Activated CD4-positive, alpha-beta T cell treated with anti-CD3 and anti-CD28 coated beads for 36 hours (primary cell): ENCODE measurements at regions of chr6 and their contacts with region 1.

Region 1: DNA sequence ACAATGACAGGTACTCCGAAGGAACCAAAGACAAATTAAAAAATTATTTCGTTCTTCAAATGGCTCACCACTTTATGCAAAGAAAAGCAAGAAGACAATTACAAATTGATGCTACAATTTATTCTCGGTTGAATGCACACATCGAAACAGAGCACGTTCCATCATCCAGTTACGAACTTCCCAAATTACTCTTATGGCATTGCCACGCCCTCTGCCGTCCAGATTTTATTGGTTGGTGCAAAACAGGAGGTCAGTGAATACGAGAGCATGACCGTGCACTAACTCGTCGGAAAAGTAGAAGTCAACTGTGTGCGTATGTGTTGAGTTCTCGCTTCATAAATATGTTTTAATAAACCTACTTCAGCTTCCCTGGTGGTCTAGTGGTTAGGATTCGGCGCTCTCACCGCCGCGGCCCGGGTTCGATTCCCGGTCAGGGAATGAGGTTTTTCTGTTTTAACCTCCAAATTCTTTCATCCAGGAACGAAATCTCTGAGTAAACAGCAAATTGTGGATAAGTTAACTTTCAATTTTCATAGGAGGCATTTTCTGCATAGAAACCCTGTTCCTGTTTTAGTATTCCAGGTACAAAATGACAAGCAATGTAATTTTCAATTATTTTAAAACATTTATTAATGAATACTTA is 23.2 kb downstream of the ZNF311 start:
- DNase-seq: peak; percentile 82
- ATAC-seq: peak; percentile 42
- H3K4me3 Mint-ChIP-seq: peak overlapping the region; percentile 86
- H3K27ac Mint-ChIP-seq: peak overlapping the region; percentile 79
- H3K4me1 Mint-ChIP-seq: peaks cover 42% of the 10 kb centered on the region
- H3K27me3 Mint-ChIP-seq: peaks cover 47% of the 10 kb centered on the region

Region 2: GRCh38 chr6:28880894-28881780 is 100.8 kb before region 1 on chr6:
- CTCF ChIA-PET with region 1: interaction called, 4 read pairs
- POLR2A ChIA-PET with region 1: no interaction called
- intact Hi-C with region 1: loop called in 1 of 2 experiments (anchors 5 kb)
- DNase-seq: peak; percentile 79
- ATAC-seq: no peak
- H3K4me3 Mint-ChIP-seq: peak overlapping the region; percentile 57
- H3K27ac Mint-ChIP-seq: peak overlapping the region; percentile 69
- H3K4me1 Mint-ChIP-seq: peaks cover 29% of the 10 kb centered on the region
- H3K27me3 Mint-ChIP-seq: peaks cover 3% of the 10 kb centered on the region

Region 3: DNA sequence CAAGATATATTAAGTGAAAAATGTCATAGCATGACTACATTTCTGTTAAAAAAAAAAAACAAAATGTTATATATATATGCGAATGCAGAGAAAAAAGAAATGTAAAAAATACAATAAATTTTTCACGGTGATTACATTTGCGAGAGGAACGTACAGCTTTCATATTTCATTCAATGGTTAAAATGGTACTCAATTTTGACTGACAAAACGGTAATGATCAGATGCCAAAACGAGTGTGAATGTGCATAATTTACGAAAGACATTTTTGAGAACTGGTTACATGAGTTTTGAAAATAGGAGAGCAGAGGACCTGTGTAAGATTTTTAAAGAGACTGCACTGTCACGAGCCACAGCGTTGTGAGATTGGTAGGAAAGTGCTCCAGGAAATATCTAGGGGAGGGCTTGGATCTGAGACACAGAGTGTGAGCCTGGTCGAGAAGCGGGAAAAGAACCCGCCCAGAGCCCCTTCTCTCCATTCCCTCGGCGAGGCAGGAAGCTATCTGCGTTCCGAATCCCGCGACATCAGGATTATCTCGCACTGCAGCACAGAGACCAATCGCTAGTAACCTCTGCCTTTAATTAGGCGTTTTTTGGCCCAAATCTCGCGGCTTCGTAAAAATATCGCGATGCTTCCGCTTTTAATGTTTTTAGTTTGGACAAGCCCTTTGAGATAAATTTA is 86.7 kb before region 1 on chr6:
- CTCF ChIA-PET with region 1: interaction called, 8 read pairs
- POLR2A ChIA-PET with region 1: no interaction called
- intact Hi-C with region 1: loop called (anchors 1 kb)
- DNase-seq: peak; percentile 94
- ATAC-seq: peak; percentile 82
- H3K4me3 Mint-ChIP-seq: peak overlapping the region; percentile 98
- H3K27ac Mint-ChIP-seq: peak overlapping the region; percentile 99
- H3K4me1 Mint-ChIP-seq: peaks cover 9% of the 10 kb centered on the region
- H3K27me3 Mint-ChIP-seq: no peaks in the 10 kb centered on the region

Region 4: GRCh38 chr6:28923318-28924102 is 58.4 kb before region 1 on chr6 and contains the start of gene TRIM27:
- CTCF ChIA-PET with region 1: interaction called, 5 read pairs
- POLR2A ChIA-PET with region 1: no interaction called
- intact Hi-C with region 1: loop called in 1 of 2 experiments (anchors 1 kb)
- DNase-seq: peak; percentile 88
- ATAC-seq: peak; percentile 81
- H3K4me3 Mint-ChIP-seq: peak within 1 kb of the TSS; percentile 96
- H3K27ac Mint-ChIP-seq: peak within 1 kb of the TSS; percentile 88
- H3K4me1 Mint-ChIP-seq: peaks cover 36% of the 10 kb centered on the region
- H3K27me3 Mint-ChIP-seq: no peaks in the 10 kb centered on the region
- total RNA-seq, gene TRIM27: 48.5 to 54.6 TPM